GM12878 (cell line): ENCODE measurements at regions of chr12 and their contacts with region 1.

Region 1: GRCh38 chr12:47742253-47742825 is 16.3 kb downstream of the RAPGEF3 start:
- DNase-seq: no peak
- ATAC-seq: peak; percentile 57
- H3K4me3 ChIP-seq: no peak overlapping the region
- H3K27ac ChIP-seq: no peak overlapping the region
- H3K4me1 ChIP-seq: peaks cover 28% of the 10 kb centered on the region
- H3K27me3 ChIP-seq: no peaks in the 10 kb centered on the region
- CTCF ChIP-seq: peak; percentile 97 to 99 (median 99)
- EP300 ChIP-seq: no peak
- POLR2A ChIP-seq: no peak
- RAD21 ChIP-seq: peak; percentile 91

Region 2: GRCh38 chr12:47705566-47706425 is 36.5 kb before region 1 on chr12 and contains the start of gene RPAP3:
- CTCF ChIA-PET with region 1: interaction called, 102 read pairs
- POLR2A ChIA-PET with region 1: no interaction called
- RAD21 ChIA-PET with region 1: interaction called, 61 read pairs
- SMC1A ChIA-PET with region 1: interaction called, 129 read pairs
- in situ Hi-C with region 1: no loop called
- intact Hi-C with region 1: no loop called
- DNase-seq: peak; percentile 65
- ATAC-seq: peak; percentile 94
- H3K4me3 ChIP-seq: peak within 1 kb of the TSS; percentile 84
- H3K27ac ChIP-seq: peak within 1 kb of the TSS; percentile 85
- H3K4me1 ChIP-seq: peaks cover 32% of the 10 kb centered on the region
- H3K27me3 ChIP-seq: no peaks in the 10 kb centered on the region
- CTCF ChIP-seq: peak; percentile 38 to 60 (median 48); a peak in 4 of 6 replicates
- EP300 ChIP-seq: no peak
- POLR2A ChIP-seq: peak; percentile 98
- RAD21 ChIP-seq: no peak
- polyA plus RNA-seq, gene RPAP3: 14.1 to 24.5 TPM

Region 3: DNA sequence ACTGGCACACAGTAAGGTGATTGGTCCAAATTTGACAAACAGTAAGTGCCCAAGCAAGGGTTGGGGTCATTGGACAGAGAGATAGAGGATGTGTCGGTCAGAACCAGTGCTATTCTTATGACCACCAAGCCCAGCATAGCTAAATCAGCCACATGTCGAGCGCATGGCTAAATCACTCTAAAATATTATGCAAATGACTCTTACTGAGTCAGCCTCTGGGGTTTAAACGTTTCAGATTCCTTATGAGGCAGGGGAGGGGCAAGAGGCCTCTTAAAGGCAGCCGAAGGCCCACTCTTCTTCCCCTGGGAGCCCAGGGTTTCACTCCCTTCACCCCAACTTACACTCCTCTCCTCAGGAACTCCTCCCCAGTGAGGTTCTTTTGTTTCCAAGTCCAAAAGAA is 16.4 kb before region 1 on chr12:
- CTCF ChIA-PET with region 1: interaction called, 87 read pairs
- POLR2A ChIA-PET with region 1: no interaction called
- RAD21 ChIA-PET with region 1: interaction called, 42 read pairs
- SMC1A ChIA-PET with region 1: interaction called, 60 read pairs
- in situ Hi-C with region 1: no loop called
- intact Hi-C with region 1: no loop called
- DNase-seq: no peak
- ATAC-seq: peak; percentile 90
- H3K4me3 ChIP-seq: no peak overlapping the region
- H3K27ac ChIP-seq: no peak overlapping the region
- H3K4me1 ChIP-seq: peaks cover 18% of the 10 kb centered on the region
- H3K27me3 ChIP-seq: no peaks in the 10 kb centered on the region
- CTCF ChIP-seq: no peak
- EP300 ChIP-seq: no peak
- POLR2A ChIP-seq: no peak
- RAD21 ChIP-seq: no peak

Region 4: DNA sequence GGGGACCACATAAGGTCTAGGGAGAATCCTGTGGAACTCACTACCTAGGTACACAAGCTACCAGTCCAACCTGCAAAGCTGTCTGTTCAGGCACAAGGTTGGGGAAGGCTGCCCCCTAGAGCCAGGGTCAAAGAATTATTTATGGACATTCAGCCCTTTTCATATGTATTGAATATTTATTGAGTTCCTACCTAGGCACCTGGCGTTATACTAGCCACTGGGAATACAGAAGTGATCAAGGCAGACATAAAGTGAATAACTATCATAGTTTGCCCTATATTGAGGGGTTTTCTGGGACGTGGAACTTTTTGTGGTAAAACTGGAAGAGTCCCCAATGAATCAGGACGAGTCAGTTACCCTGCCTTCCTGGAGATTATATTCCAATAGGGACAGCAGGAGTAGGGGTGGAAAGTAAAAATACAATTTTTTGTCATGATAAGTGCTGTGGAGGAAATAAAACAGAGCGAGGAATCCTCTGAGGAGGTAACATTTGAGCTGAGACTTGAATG is 24.9 kb after region 1 on chr12:
- CTCF ChIA-PET with region 1: interaction called, 814 read pairs
- POLR2A ChIA-PET with region 1: interaction called, 40 read pairs
- RAD21 ChIA-PET with region 1: interaction called, 327 read pairs
- SMC1A ChIA-PET with region 1: interaction called, 277 read pairs
- in situ Hi-C with region 1: no loop called
- intact Hi-C with region 1: loop called (anchors 1 kb)
- DNase-seq: no peak
- ATAC-seq: peak; percentile 89
- H3K4me3 ChIP-seq: no peak overlapping the region
- H3K27ac ChIP-seq: no peak overlapping the region
- H3K4me1 ChIP-seq: no peaks in the 10 kb centered on the region
- H3K27me3 ChIP-seq: no peaks in the 10 kb centered on the region
- CTCF ChIP-seq: peak; percentile 68 to 87 (median 73)
- EP300 ChIP-seq: no peak
- POLR2A ChIP-seq: no peak
- RAD21 ChIP-seq: peak; percentile 92

Region 5: DNA sequence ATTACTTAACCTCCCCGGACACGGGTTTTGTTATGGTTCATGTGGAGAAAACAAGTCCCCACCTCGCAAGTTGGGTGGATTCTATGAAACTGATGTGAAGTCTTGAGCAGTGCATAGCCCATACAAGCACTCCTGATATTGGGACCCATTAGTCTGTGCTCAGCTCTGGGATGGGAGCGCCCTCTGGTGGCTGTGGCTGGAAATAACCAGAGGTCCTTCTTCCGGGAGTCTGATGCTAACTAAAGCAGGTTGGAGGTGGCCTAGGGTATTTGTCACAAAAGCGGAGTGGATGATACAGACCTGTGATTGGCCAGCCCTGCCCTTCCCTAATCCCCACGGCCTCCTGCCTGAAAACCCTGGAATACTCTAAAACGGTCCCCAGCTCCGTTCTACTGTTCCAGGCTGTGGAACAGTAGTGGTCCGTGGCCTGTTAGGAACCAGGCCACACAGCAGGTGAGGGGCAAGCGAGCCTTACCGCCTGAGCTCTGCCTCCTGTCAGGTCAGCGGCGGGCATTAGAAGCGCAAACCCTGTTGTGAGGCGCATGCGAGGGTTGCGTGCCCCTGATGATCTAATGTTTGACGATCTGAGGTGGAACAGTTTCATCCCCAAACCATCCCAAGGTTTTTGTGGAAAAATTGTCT is 37.1 kb after region 1 on chr12:
- CTCF ChIA-PET with region 1: interaction called, 814 read pairs
- POLR2A ChIA-PET with region 1: interaction called, 5 read pairs
- RAD21 ChIA-PET with region 1: interaction called, 120 read pairs
- SMC1A ChIA-PET with region 1: interaction called, 139 read pairs
- in situ Hi-C with region 1: no loop called
- intact Hi-C with region 1: loop called (anchors 1 kb)
- DNase-seq: peak; percentile 53
- ATAC-seq: peak; percentile 95
- H3K4me3 ChIP-seq: no peak overlapping the region
- H3K27ac ChIP-seq: no peak overlapping the region
- H3K4me1 ChIP-seq: peaks cover 11% of the 10 kb centered on the region; the same call in 1 of the 2 replicates
- H3K27me3 ChIP-seq: no peaks in the 10 kb centered on the region
- CTCF ChIP-seq: peak; percentile 92 to 97 (median 95)
- EP300 ChIP-seq: no peak
- POLR2A ChIP-seq: no peak; the same call in none of the 2 replicates
- RAD21 ChIP-seq: peak; percentile 95

Region 6: DNA sequence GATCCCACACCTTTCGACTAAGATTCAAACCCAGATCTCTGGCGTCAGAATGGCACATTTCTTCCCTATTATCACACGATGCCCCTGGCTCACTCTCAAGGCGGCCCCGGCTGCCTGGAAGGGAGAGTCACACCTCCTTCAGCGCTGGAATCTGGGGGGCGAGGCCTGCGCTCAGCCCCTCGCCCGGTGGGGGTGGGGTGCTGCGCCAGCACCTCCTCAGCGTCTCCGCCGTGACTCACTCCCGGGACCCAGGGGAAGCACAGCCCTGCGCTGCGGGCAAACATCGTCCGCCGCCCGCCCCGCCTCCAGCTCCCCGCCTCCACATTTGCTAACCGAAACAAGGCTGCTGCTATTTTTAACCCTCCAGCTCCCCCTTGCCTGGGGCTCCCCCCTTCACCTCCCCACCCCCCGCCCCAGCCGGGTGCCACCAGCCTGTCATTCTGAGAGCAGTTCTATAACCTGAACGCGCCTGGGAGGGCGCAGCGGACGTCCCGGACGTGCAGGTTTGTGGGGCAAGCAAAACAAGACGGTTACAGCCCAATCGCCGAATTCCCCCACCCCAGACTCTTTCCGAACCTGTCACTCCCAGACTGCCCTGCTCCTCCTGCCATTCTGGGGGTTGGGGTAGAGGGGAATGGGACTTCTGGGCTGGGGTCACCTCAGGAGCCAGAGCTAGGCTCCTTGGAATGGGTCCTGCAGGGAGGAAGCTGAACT is 70.6 kb after region 1 on chr12:
- CTCF ChIA-PET with region 1: interaction called, 14 read pairs
- POLR2A ChIA-PET with region 1: interaction called, 6 read pairs
- RAD21 ChIA-PET with region 1: interaction called, 5 read pairs
- SMC1A ChIA-PET with region 1: interaction called, 3 read pairs
- in situ Hi-C with region 1: no loop called
- intact Hi-C with region 1: no loop called
- DNase-seq: peak; percentile 73
- ATAC-seq: peak; percentile 83
- H3K4me3 ChIP-seq: peak overlapping the region; percentile 75
- H3K27ac ChIP-seq: peak overlapping the region; percentile 85
- H3K4me1 ChIP-seq: peaks cover 80% of the 10 kb centered on the region
- H3K27me3 ChIP-seq: no peaks in the 10 kb centered on the region; a peak in 2 of 4 replicates
- CTCF ChIP-seq: peak in 1 of 3 experiments; percentile 25; a peak in 2 of 6 replicates
- EP300 ChIP-seq: peak; percentile 16 to 31; a peak in 1 of 4 replicates
- POLR2A ChIP-seq: peak; percentile 88
- RAD21 ChIP-seq: peak; percentile 35; the same call in 1 of the 2 replicates

Region 7: DNA sequence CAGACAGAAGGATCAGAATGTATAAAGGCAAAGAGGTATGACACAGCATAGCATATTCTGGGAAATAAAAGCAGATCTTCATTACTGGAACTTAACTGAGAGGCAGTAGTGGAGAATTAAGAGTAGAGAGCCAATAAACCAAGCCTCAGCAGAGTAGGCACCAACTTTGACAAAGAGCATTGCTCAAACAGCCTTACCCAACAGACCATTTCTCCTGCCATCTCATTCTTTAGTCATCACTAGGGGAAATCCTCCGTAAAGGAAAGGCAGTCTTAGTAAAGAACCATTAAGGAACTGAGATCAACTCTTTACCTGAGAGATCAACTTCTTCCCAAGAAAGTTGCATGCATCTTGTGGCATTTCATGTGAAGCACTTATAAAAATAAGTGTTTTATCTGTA is 326.9 kb after region 1 on chr12:
- CTCF ChIA-PET with region 1: no interaction called
- POLR2A ChIA-PET with region 1: no interaction called
- RAD21 ChIA-PET with region 1: no interaction called
- SMC1A ChIA-PET with region 1: no interaction called
- in situ Hi-C with region 1: no loop called
- intact Hi-C with region 1: no loop called
- DNase-seq: no peak
- ATAC-seq: 0 out of 3 replicates have a peak, but pooled peaks have one; percentile 19
- H3K4me3 ChIP-seq: no peak overlapping the region
- H3K27ac ChIP-seq: no peak overlapping the region
- H3K4me1 ChIP-seq: no peaks in the 10 kb centered on the region
- H3K27me3 ChIP-seq: no peaks in the 10 kb centered on the region
- CTCF ChIP-seq: no peak
- EP300 ChIP-seq: no peak
- POLR2A ChIP-seq: no peak
- RAD21 ChIP-seq: no peak

Region 8: DNA sequence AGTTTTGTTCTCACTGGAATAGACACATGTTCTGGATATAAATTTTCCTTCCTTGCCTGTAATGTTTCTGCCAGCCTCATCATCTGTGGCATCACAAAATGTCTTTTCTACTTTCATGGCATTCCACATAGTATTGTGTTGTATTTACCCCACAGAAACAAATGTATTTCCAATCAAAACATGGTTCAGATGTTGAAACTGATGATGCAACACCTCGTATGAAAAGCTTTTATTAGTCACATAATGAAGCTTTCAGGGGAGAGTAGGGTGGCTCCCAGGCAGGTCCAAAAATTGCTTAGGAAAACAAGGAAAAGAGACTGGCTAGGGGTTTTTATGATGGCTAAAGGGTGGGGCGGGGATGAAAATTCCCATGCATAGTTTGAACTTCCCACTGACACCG is 637.4 kb after region 1 on chr12:
- CTCF ChIA-PET with region 1: no interaction called
- POLR2A ChIA-PET with region 1: no interaction called
- RAD21 ChIA-PET with region 1: no interaction called
- SMC1A ChIA-PET with region 1: no interaction called
- in situ Hi-C with region 1: no loop called
- intact Hi-C with region 1: no loop called
- DNase-seq: no peak
- ATAC-seq: no peak
- H3K4me3 ChIP-seq: no peak overlapping the region
- H3K27ac ChIP-seq: no peak overlapping the region
- H3K4me1 ChIP-seq: no peaks in the 10 kb centered on the region
- H3K27me3 ChIP-seq: no peaks in the 10 kb centered on the region; a peak in 1 of 4 replicates
- CTCF ChIP-seq: no peak
- EP300 ChIP-seq: no peak
- POLR2A ChIP-seq: no peak
- RAD21 ChIP-seq: no peak